Activated naive CD4-positive, alpha-beta T cell treated with anti-CD3 and anti-CD28 coated beads for 36 hours (primary cell): ENCODE measurements at regions of chr9 and their contacts with region 1.

Region 1: GRCh38 chr9:16496908-16497307 is 373.6 kb downstream of the BNC2 start:
- DNase-seq: no peak
- H3K4me3 Mint-ChIP-seq: no peak overlapping the region
- H3K27ac Mint-ChIP-seq: no peak overlapping the region
- H3K4me1 Mint-ChIP-seq: no peaks in the 10 kb centered on the region
- H3K27me3 Mint-ChIP-seq: no peaks in the 10 kb centered on the region

Region 2: GRCh38 chr9:16434526-16434925 is 62.4 kb before region 1 on chr9:
- CTCF ChIA-PET with region 1: no interaction called
- intact Hi-C with region 1: loop called (anchors 10 kb)
- DNase-seq: no peak
- H3K4me3 Mint-ChIP-seq: no peak overlapping the region
- H3K27ac Mint-ChIP-seq: no peak overlapping the region
- H3K4me1 Mint-ChIP-seq: no peaks in the 10 kb centered on the region
- H3K27me3 Mint-ChIP-seq: no peaks in the 10 kb centered on the region